ENCODE measurements at regions of chr1 and their contacts with region 1.

Region 1: DNA sequence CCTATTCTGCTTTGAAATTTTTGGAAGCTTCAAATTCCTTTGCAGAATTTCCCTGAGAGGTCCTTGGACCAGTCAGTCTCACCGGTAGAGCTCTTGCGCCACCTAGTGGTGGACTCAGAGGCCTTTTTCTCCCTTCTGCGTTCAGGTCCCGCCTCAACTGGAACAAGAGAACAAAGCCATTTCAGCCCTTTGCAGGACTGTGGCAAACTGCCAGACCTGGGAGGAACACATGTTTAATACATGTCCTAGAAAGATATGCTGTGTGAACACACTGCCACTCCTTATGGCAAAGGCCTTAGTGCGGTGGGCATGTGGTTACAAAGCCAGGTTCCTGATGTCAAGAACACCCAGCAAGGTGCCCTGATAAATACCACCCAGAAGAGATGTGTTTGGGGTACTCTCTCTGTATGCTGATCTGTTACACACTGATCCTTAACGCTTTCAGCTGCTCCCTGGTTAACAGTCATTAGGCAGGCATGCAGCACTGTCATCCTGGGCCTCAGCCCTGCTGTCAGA is 82.2 kb upstream of the SSX2IP start:
- DNase-seq: peak; percentile 81
- ATAC-seq: peak; percentile 71
- H3K4me3 Mint-ChIP-seq: no peak overlapping the region
- H3K27ac Mint-ChIP-seq: no peak overlapping the region
- H3K4me1 Mint-ChIP-seq: no peaks in the 10 kb centered on the region
- H3K27me3 Mint-ChIP-seq: peaks cover 2% of the 10 kb centered on the region
- CTCF ChIP-seq: peak; percentile 95

Region 2: DNA sequence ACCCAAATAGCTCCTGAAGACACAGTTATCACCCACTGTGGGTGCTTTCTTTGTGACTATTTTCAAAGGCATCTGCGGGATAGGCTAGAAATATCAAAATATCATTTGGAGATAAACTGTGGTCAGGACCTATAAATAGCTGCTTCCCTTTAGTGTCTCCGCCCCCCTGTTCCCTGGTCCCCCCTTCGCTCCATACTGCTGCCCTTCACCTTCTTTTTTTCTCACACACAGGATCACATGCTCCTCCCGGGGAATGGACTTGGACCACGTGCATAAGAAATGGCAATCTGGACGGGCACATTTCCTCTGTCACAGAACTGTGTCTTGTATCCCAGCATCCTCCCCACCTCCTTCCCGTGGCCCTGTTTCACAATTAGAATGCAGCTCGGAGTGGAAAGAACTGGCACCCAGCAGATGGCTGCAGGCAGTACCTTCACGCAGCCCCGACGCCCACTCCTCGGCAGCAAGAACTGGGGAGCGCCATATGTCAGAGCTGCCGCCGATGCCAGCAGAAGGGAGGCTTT is 13.5 kb before region 1 on chr1:
- CTCF ChIA-PET with region 1: interaction called, 46 read pairs
- POLR2A ChIA-PET with region 1: interaction called, 3 read pairs
- intact Hi-C with region 1: no loop called
- DNase-seq: peak; percentile 37
- ATAC-seq: peak; percentile 75
- H3K4me3 Mint-ChIP-seq: peak overlapping the region; percentile 23
- H3K27ac Mint-ChIP-seq: no peak overlapping the region
- H3K4me1 Mint-ChIP-seq: peaks cover 10% of the 10 kb centered on the region
- H3K27me3 Mint-ChIP-seq: peaks cover 8% of the 10 kb centered on the region
- CTCF ChIP-seq: no peak

Measured in activated CD8-positive, alpha-beta T cell treated with anti-CD3 and anti-CD28 coated beads for 36 hours (primary cell).